MCF 10A (cell line): ENCODE measurements at regions of chr9 and their contacts with region 1.

Region 1: DNA sequence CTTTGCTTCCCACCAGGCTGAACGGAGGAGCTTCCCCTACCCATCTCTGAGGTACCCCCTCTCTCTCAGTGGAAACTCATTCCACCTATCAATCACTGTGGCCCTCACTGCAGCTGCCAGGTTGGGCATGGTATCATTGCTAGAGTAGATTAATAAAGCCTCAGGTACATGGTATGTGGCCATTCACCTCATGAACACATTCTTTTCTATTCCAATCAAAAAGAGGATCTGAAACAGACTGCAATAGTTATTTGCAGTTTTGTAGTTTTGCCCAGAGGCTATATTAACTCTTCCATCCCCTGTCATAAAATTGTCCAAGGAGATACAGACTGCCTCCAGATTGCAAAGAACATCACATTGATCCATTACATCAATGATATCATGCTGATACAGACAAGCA is 85.8 kb upstream of the MVB12B start:
- DNase-seq: no peak
- H3K4me3 Mint-ChIP-seq: no peak overlapping the region
- H3K27ac Mint-ChIP-seq: no peak overlapping the region
- H3K4me1 Mint-ChIP-seq: no peaks in the 10 kb centered on the region
- H3K27me3 Mint-ChIP-seq: peaks cover 44% of the 10 kb centered on the region
- CTCF ChIP-seq: no peak

Region 2: DNA sequence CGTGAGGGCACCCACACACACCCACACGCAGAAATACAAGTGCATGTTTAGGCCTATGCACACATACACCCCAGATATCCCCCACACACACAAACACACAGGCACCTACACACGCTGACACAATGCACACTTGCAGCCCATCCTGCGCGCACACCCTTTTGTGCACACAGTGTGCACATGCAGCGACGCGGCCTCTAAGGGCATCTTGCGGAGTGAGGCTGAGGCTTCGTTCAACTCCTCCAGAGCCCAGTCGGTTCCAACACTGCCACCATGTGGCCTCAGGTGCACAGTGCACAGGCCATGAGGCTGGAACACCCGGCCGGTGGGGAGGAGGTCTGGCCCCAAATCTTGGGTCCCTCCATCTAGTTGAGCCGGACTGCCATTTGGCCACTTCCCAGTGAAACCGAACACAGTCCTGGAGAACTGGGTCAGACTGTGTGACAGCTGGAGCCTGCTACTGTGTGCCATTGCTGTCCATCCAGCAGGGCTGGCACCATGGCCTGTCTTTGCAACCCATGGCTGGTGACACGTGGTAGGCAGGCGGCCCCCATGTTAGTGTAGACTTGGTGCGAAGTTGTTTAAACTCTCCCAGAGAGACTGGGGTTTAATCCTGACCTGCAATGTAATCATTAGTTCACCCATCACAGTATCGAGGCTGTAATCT is 11.9 kb before region 1 on chr9:
- CTCF ChIA-PET with region 1: interaction called, 10 read pairs
- POLR2A ChIA-PET with region 1: no interaction called
- intact Hi-C with region 1: no loop called
- DNase-seq: peak; percentile 70
- H3K4me3 Mint-ChIP-seq: no peak overlapping the region
- H3K27ac Mint-ChIP-seq: no peak overlapping the region
- H3K4me1 Mint-ChIP-seq: no peaks in the 10 kb centered on the region
- H3K27me3 Mint-ChIP-seq: peaks cover 52% of the 10 kb centered on the region
- CTCF ChIP-seq: peak; percentile 98

Region 3: DNA sequence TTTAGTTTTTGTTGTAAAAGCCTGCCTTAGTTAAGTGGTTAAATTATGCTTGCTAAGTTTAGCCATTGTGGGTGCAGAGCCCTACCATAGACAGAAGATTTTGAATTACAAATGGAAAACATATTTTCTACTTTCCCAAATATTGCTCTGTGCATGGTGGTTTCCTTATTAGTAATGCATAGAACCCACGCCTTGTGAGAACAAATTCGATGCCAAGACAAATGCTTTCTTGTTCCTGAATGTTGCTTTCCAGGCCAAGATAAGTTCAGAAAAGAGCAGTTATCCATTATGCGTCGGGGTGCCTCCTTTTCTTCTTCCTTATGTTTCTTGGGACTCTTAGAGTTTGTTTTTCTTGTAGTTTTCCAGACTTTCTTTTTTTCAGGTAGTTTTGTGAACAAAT is 992.7 kb after region 1 on chr9:
- CTCF ChIA-PET with region 1: no interaction called
- POLR2A ChIA-PET with region 1: no interaction called
- intact Hi-C with region 1: no loop called
- DNase-seq: no peak
- H3K4me3 Mint-ChIP-seq: no peak overlapping the region
- H3K27ac Mint-ChIP-seq: no peak overlapping the region
- H3K4me1 Mint-ChIP-seq: no peaks in the 10 kb centered on the region
- H3K27me3 Mint-ChIP-seq: no peaks in the 10 kb centered on the region
- CTCF ChIP-seq: no peak